Colonic mucosa (tissue), 4 donors: ENCODE measurements at regions of chr9 and their contacts with region 1.

Region 1: GRCh38 chr9:81689343-81690190 is at the start of gene TLE1:
- DNase-seq: peak; percentile 100
- H3K4me3 ChIP-seq: peak within 1 kb of the TSS; percentile 82
- H3K27ac ChIP-seq: peak within 1 kb of the TSS; percentile 92
- H3K4me1 ChIP-seq: no peaks in the 10 kb centered on the region
- H3K27me3 ChIP-seq: no peaks in the 10 kb centered on the region
- CTCF ChIP-seq: no peak
- total RNA-seq, gene TLE1: 43.8 to 54.8 TPM

Region 2: DNA sequence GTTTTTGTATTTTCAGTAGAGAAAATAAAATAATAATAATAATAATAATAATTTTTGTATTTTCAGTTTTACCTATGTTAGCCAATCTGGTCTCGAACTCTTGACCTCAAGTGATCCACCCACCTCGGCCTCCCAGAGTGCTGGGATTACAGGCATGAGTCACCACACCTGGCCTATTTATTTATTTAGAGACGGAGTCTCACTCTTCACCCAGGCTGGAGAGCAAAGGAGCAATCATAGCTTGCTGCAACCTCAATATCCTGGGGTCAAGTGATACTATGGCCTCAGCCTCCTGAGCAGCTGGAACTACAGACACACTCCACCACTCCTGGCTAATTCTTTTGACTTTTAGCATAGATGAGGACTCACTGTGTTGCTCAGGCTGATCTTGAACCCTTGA is 167.7 kb before region 1 on chr9:
- intact Hi-C with region 1: loop called (anchors 5 kb)
- DNase-seq: no peak
- H3K4me3 ChIP-seq: no peak overlapping the region
- H3K27ac ChIP-seq: no peak overlapping the region
- H3K4me1 ChIP-seq: no peaks in the 10 kb centered on the region
- H3K27me3 ChIP-seq: no peaks in the 10 kb centered on the region
- CTCF ChIP-seq: no peak

Region 3: GRCh38 chr9:81592887-81593266 is 96.7 kb before region 1 on chr9:
- intact Hi-C with region 1: loop called (anchors 10 kb)
- DNase-seq: peak; percentile 77
- H3K4me3 ChIP-seq: no peak overlapping the region
- H3K27ac ChIP-seq: peak overlapping the region; percentile 76
- H3K4me1 ChIP-seq: peaks cover 7% of the 10 kb centered on the region
- H3K27me3 ChIP-seq: no peaks in the 10 kb centered on the region
- CTCF ChIP-seq: no peak

Region 4: DNA sequence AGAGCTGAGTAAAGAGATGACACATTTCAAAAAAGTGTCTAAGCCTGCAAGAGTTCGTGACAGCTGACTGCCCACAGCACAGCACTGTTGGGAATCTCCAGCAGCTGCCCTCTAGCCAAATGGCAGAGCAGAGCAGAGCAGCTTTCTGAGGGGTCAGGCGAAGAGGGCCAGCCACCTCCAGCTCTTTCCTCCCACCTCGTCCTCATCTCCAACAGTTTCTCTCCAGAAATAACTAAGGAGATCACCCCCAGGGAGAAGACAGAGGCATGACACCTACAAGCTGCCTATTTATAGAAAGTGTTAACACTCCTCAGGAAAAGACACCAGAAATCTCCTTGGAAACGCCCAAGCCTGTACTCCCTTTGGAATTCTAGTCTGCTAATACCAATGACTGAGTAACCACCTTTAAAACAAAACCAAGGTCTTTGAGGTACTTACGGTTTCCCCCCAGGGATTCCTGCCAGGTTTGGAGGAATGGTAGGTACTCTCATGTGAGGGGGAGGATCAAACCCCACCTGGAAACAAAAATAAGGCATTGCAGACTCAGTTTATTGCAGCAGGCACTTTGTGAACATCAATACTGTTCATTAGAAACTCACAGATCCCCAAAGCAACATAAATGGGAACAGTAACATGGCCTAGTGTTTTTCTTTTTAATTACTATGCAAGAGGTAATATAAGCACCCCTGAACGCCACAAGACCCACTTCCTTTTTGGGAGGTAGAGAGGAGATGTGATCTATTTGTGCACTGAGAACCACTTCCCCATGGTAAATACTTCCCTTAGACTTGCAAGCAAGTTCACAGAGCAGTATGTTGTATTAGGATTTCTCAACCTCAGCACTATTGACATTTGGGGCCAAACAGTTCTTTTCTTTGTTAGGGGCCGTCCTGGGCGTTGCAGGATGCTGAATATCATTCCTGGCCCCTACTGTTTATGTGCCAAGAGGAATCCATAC is 79.5 kb before region 1 on chr9:
- intact Hi-C with region 1: no loop called
- DNase-seq: no peak
- H3K4me3 ChIP-seq: no peak overlapping the region
- H3K27ac ChIP-seq: no peak overlapping the region
- H3K4me1 ChIP-seq: no peaks in the 10 kb centered on the region
- H3K27me3 ChIP-seq: no peaks in the 10 kb centered on the region
- CTCF ChIP-seq: no peak

Region 5: DNA sequence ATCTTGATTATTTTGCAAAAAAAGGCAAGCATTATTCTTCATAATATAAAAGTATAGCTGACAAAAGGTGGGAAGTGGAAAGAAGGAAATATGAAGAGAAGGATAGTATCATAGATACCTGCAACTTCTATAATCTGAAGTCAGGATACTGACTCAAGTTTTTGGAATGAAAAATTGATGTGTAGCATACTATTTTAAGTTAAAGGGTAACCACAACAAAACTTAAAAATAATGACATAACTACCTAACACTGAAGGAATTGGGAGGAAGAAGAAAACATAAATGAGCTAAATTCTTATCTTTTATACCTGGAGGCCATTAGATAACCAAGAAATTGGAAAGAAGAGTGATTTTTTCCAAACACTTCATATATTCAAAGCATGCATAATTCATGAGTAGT is 51.5 kb after region 1 on chr9:
- intact Hi-C with region 1: no loop called
- DNase-seq: no peak
- H3K4me3 ChIP-seq: no peak overlapping the region
- H3K27ac ChIP-seq: no peak overlapping the region
- H3K4me1 ChIP-seq: no peaks in the 10 kb centered on the region
- H3K27me3 ChIP-seq: no peaks in the 10 kb centered on the region
- CTCF ChIP-seq: no peak

Region 6: DNA sequence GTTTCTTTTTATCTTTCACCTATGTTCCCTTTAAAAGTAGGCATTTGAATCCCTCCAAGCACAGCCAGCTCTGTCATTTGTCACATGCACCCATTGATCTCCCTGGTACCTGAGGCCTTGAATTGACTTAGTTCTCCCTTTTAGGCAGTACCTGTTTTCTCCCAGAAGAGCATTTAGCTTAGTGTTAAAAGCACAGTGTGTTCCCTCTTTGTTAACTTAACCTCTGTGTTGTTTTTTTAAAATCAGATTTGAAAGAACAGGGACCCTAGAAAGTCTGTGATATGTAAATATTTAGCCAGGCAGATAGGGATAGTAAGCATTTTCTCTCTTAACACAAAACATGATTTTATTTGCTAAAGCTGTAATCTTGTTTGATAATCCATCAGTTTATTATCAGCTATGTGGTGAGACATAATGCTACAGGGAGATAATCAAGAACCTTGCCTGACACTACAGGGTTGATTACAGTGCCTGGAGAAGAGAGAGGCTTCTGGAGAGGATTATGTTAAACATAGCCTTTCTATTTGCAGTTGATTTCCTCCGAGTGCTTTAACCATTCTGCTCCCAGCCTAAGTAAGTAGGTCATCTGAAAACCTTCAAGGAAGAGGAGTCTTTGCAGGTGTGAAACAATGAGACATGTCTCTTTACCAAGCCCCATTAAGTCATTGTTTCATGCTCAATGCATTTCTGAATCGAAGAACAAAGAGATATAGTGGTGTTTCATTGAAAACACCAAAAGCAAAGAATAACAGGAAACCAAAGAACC is 125.0 kb after region 1 on chr9:
- intact Hi-C with region 1: no loop called
- DNase-seq: no peak
- H3K4me3 ChIP-seq: no peak overlapping the region
- H3K27ac ChIP-seq: no peak overlapping the region
- H3K4me1 ChIP-seq: no peaks in the 10 kb centered on the region
- H3K27me3 ChIP-seq: no peaks in the 10 kb centered on the region
- CTCF ChIP-seq: no peak

Region 7: DNA sequence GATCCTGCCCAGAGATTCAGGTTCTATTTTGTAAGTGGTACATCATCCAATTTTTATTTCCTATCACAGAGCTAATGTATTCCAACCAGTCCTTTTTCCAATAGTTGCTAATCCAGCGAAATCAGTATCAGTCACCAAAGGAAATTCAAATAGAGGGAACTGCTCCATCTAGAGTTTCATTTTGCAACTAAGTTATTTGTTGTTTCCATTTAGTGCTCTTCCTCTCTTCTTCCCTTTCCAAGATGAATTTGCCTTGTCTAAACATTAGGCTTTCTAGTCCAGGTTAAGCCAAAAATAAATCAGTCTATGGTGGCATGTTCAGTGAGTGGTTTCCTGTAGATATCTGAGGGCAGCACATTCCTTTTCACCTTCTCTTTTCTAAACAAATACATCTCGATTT is 158.9 kb after region 1 on chr9:
- intact Hi-C with region 1: loop called (anchors 10 kb)
- DNase-seq: no peak
- H3K4me3 ChIP-seq: no peak overlapping the region
- H3K27ac ChIP-seq: no peak overlapping the region
- H3K4me1 ChIP-seq: no peaks in the 10 kb centered on the region
- H3K27me3 ChIP-seq: no peaks in the 10 kb centered on the region
- CTCF ChIP-seq: peak; percentile 32

Region 8: GRCh38 chr9:82606492-82607382 is 917.2 kb after region 1 on chr9:
- intact Hi-C with region 1: loop called (anchors 10 kb)
- DNase-seq: peak; percentile 66
- H3K4me3 ChIP-seq: no peak overlapping the region
- H3K27ac ChIP-seq: no peak overlapping the region
- H3K4me1 ChIP-seq: no peaks in the 10 kb centered on the region
- H3K27me3 ChIP-seq: no peaks in the 10 kb centered on the region
- CTCF ChIP-seq: peak; percentile 43